MCF 10A (cell line): ENCODE measurements at regions of chr16 and their contacts with region 1.

Region 1: GRCh38 chr16:86575754-86576557 is 2.4 kb upstream of the FOXL1 start:
- DNase-seq: peak; percentile 98
- H3K4me3 Mint-ChIP-seq: peak overlapping the region; percentile 87
- H3K27ac Mint-ChIP-seq: peak overlapping the region; percentile 73
- H3K4me1 Mint-ChIP-seq: peaks cover 28% of the 10 kb centered on the region
- H3K27me3 Mint-ChIP-seq: no peaks in the 10 kb centered on the region
- CTCF ChIP-seq: peak; percentile 64

Region 2: DNA sequence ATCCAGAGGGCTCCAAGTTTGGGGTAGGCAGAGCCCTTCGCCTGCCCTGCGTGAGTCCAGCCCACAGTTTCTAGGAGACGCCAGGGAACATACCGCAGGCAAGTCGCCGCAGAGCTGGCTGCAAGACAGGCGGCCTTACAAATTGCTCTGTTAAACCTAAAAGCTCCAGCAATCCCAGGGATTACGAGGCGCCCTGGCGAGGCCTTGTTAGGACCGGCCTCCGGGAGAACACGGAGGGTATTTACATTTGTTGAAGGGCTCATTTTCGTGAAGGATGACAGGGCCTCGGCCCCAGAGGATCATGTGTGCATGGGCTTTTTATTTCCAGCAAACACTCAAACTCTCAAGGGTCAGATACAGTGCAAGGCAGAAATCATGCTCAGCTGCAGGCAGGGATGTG is 143.3 kb before region 1 on chr16:
- CTCF ChIA-PET with region 1: no interaction called
- POLR2A ChIA-PET with region 1: no interaction called
- intact Hi-C with region 1: no loop called
- DNase-seq: no peak
- H3K4me3 Mint-ChIP-seq: no peak overlapping the region
- H3K27ac Mint-ChIP-seq: no peak overlapping the region
- H3K4me1 Mint-ChIP-seq: no peaks in the 10 kb centered on the region
- H3K27me3 Mint-ChIP-seq: peaks cover 76% of the 10 kb centered on the region
- CTCF ChIP-seq: no peak

Region 3: GRCh38 chr16:86590501-86591144 is 14.7 kb after region 1 on chr16:
- CTCF ChIA-PET with region 1: interaction called, 4 read pairs
- POLR2A ChIA-PET with region 1: no interaction called
- intact Hi-C with region 1: loop called (anchors 2 kb)
- DNase-seq: peak; percentile 75
- H3K4me3 Mint-ChIP-seq: no peak overlapping the region
- H3K27ac Mint-ChIP-seq: peak overlapping the region; percentile 47
- H3K4me1 Mint-ChIP-seq: peaks cover 3% of the 10 kb centered on the region
- H3K27me3 Mint-ChIP-seq: no peaks in the 10 kb centered on the region
- CTCF ChIP-seq: no peak

Region 4: GRCh38 chr16:86664533-86665318 is 88.8 kb after region 1 on chr16:
- CTCF ChIA-PET with region 1: interaction called, 4 read pairs
- POLR2A ChIA-PET with region 1: interaction called, 42 read pairs
- intact Hi-C with region 1: loop called (anchors 2 kb)
- DNase-seq: peak; percentile 98
- H3K4me3 Mint-ChIP-seq: peak overlapping the region; percentile 66
- H3K27ac Mint-ChIP-seq: peak overlapping the region; percentile 98
- H3K4me1 Mint-ChIP-seq: peaks cover 47% of the 10 kb centered on the region
- H3K27me3 Mint-ChIP-seq: no peaks in the 10 kb centered on the region
- CTCF ChIP-seq: no peak

Region 5: DNA sequence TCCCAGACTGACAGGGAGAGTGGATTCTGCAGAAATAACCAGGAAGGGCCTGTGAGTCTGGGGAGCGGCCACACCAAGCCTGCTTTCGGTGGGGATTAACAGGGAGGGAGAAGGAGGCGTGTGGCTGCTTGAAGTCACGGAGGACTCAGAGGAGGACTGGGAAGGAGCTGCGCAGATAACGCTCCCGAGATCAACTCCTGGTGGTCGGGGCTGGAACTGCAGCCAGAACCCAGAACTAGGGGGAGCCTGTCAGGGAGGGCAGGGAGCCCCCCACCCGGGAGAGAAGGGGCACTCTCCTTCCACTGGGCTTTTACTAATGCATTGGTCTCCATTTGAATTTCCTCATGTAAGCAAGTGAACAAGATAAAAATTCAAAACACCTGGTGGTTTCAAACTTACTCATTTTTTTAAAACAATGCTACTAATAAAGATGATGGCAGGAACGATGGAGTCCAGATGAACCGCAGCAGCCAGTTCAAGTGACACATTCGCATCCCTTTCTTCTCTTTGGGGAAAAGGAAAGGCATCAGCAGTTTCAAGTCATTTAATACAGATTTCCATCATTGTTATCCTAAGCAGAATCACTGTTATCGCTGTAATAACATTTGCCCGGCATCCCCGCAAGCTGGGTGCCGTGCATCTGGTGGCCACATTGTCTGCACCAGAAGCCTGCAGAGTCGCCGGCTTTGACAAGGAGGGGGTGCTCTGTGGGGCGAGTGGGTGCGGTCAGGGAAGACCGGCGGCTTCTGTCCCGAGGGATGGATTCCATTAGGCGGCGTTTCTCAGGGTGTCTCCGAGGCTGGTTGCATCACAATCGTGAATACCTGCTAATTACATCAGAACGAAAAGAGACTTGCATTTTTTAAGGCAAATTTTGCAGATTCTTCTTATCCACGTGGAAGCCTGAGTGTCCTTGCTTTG is 185.4 kb after region 1 on chr16:
- CTCF ChIA-PET with region 1: interaction called, 9 read pairs
- POLR2A ChIA-PET with region 1: interaction called, 4 read pairs
- intact Hi-C with region 1: loop called (anchors 2 kb)
- DNase-seq: peak; percentile 83
- H3K4me3 Mint-ChIP-seq: peak overlapping the region; percentile 60
- H3K27ac Mint-ChIP-seq: no peak overlapping the region
- H3K4me1 Mint-ChIP-seq: peaks cover 14% of the 10 kb centered on the region
- H3K27me3 Mint-ChIP-seq: no peaks in the 10 kb centered on the region
- CTCF ChIP-seq: peak; percentile 86

Region 6: GRCh38 chr16:86809458-86809981 is 233.6 kb after region 1 on chr16:
- CTCF ChIA-PET with region 1: no interaction called
- POLR2A ChIA-PET with region 1: no interaction called
- intact Hi-C with region 1: loop called (anchors 1 kb)
- DNase-seq: peak; percentile 75
- H3K4me3 Mint-ChIP-seq: no peak overlapping the region
- H3K27ac Mint-ChIP-seq: no peak overlapping the region
- H3K4me1 Mint-ChIP-seq: peaks cover 9% of the 10 kb centered on the region
- H3K27me3 Mint-ChIP-seq: no peaks in the 10 kb centered on the region
- CTCF ChIP-seq: peak; percentile 27

Region 7: DNA sequence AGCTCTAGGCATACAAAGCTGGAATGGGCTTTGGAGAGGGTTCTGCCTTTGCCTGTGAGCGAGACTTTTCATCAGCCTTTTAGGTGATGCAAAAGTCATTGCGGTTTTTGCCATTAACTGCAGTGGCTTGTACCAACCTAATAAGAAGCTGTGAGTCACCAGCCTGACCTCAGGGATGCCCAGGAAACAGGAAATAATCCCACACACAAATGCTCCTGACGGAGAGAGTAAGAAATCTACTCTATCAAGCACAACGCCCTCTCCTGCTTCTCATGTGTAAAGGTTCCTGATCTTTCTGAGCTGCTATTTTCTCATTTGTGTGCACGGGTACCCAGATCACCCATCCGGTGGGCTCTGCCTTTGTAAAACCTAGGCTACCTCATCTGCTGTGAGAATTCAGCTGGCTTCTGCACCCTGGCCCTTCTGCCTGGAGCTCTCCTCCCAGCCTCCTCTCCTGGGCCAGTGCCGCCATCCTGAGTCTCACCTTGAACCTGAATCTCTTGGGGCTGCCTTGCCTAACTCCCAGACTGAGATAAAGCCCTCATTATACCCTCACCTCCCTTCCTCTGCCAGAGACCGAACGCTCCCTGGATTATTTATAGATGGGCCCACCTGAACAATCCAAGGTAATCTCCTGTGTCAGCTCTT is 441.5 kb after region 1 on chr16:
- CTCF ChIA-PET with region 1: interaction called, 3 read pairs
- POLR2A ChIA-PET with region 1: no interaction called
- intact Hi-C with region 1: loop called (anchors 2 kb)
- DNase-seq: peak; percentile 93
- H3K4me3 Mint-ChIP-seq: no peak overlapping the region
- H3K27ac Mint-ChIP-seq: no peak overlapping the region
- H3K4me1 Mint-ChIP-seq: peaks cover 7% of the 10 kb centered on the region
- H3K27me3 Mint-ChIP-seq: peaks cover 18% of the 10 kb centered on the region
- CTCF ChIP-seq: peak; percentile 41